AG04449 (cell line): ENCODE measurements at regions of chr17 and their contacts with region 1.

Region 1: GRCh38 chr17:37047631-37048104 is 98.9 kb downstream of the AATF start:
- DNase-seq: peak; percentile 36
- H3K4me3 ChIP-seq: no peak overlapping the region
- CTCF ChIP-seq: peak; percentile 76

Region 2: DNA sequence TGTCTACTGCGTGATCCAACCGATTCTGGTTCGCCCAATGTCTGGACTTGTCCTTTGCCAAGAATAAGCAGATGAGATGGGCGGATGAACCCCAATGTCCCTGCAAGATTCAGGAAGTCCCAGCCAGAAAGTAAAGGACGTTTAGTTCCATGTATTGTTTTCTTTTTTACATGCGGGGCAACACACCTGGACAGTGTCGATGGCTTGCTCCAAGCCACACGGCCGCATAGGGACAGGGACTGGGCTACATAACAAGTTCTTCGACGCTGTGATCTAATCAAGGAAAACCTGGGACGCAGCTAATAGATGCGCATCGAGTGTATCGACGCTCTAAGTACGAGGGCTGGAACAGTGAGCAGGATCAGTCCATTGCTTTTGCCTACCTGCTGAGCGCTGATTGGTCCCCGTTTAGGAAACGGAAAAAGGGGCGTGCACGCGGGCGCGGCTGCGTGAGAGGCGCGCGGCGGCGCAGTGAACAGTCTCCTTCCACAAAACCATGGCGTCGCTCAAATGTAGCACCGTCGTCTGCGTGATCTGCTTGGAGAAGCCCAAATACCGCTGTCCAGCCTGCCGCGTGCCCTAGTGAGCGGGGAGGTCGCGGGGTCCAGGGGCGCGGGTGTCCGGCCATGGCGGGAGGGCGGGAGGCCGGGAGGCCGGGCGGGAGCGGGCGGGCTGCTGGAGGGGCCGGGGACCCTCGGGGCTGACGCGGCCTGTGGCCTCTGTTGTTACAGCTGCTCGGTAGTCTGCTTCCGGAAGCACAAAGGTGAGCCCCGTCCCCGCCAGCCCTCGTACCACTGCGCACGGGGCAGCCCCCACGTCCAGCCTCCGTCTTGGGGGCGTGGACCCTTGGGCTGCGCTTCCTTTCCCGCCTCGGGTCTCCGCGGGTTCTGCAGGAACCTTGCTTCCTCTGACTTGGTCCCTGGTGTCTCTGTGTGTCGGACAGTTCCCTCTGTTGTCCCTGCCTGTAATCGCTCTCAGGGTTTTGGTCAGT is 561.2 kb before region 1 on chr17 and contains the start of gene ZNHIT3:
- CTCF ChIA-PET with region 1: no interaction called
- POLR2A ChIA-PET with region 1: no interaction called
- DNase-seq: peak; percentile 67
- H3K4me3 ChIP-seq: peak within 1 kb of the TSS; percentile 91
- CTCF ChIP-seq: no peak

Region 3: DNA sequence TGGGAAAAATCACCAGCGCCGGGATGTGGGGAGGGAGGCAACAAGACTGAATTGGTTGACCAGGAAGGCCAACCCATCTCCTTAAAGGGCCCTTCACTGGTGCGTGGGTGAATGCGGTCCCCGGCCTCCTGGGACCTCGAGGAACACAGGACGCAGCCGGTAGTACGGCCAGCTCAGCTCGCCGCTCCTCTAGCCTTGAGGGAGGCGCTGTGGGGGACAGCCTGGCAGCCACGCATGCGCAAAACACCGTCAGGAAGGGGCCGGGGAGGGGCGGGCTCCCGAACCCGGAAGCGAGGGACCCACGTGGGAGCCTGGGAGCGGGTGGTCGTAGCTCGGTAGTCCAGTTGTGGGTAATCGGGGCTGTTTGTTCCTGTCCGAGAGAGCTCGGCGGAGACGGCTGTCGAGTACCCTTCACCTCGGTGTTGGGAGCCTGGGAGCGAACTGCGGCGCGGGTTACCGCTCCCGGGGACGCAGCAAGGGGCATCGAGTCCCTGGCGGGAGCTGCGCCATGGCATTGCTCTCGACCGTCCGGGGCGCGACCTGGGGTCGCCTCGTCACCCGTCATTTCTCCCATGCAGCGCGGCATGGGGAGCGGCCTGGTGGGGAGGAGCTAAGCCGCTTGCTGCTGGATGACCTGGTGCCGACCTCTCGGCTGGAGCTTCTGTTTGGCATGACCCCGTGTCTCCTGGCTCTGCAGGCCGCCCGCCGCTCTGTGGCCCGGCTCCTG is 446.2 kb before region 1 on chr17 and contains the start of gene MRM1:
- CTCF ChIA-PET with region 1: interaction called, 78 read pairs
- POLR2A ChIA-PET with region 1: no interaction called
- DNase-seq: peak; percentile 46
- H3K4me3 ChIP-seq: peak within 1 kb of the TSS; percentile 97
- CTCF ChIP-seq: peak; percentile 38

Region 4: GRCh38 chr17:36629252-36629847 is 418.3 kb before region 1 on chr17:
- CTCF ChIA-PET with region 1: interaction called, 170 read pairs
- POLR2A ChIA-PET with region 1: no interaction called
- DNase-seq: no peak
- H3K4me3 ChIP-seq: no peak overlapping the region
- CTCF ChIP-seq: peak; percentile 95

Region 5: GRCh38 chr17:37019117-37019740 is 28.4 kb before region 1 on chr17:
- CTCF ChIA-PET with region 1: interaction called, 13 read pairs
- POLR2A ChIA-PET with region 1: no interaction called
- DNase-seq: no peak
- H3K4me3 ChIP-seq: no peak overlapping the region
- CTCF ChIP-seq: no peak

Region 6: GRCh38 chr17:37067555-37068111 is 20.0 kb after region 1 on chr17:
- CTCF ChIA-PET with region 1: interaction called, 10 read pairs
- POLR2A ChIA-PET with region 1: no interaction called
- DNase-seq: peak; percentile 23
- H3K4me3 ChIP-seq: no peak overlapping the region
- CTCF ChIP-seq: no peak

Region 7: DNA sequence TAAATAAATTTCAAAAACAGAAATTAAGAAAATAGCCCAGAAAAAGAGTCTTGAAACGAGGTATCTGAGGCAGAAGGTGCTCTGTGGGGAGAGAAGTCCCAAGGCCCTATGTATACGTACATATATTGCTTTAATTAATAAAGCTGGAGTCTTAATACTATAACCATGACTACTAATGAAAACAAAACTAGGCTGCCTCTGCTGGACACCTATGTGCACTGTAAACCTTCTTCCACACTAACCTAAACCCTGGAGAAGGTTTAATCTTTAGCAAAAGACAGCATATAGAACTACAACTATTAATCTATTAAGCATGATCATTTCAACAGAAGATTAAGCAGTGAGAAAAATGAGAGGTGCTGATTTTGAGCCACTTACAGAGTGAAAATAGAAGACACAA is 174.2 kb after region 1 on chr17:
- CTCF ChIA-PET with region 1: interaction called, 18 read pairs
- POLR2A ChIA-PET with region 1: no interaction called
- DNase-seq: no peak
- H3K4me3 ChIP-seq: no peak overlapping the region
- CTCF ChIP-seq: no peak